ENCODE measurements at regions of chr13 and their contacts with region 1.

Region 1: GRCh38 chr13:77480066-77480465 is 55.4 kb upstream of the SCEL start:
- DNase-seq: no peak
- ATAC-seq: no peak
- H3K4me3 Mint-ChIP-seq: no peak overlapping the region
- H3K27ac Mint-ChIP-seq: no peak overlapping the region
- H3K4me1 Mint-ChIP-seq: peaks cover 14% of the 10 kb centered on the region
- H3K27me3 Mint-ChIP-seq: no peaks in the 10 kb centered on the region

Region 2: GRCh38 chr13:76991796-76992547 is 488.1 kb before region 1 on chr13 and contains the start of gene CLN5:
- CTCF ChIA-PET with region 1: interaction called, 3 read pairs
- POLR2A ChIA-PET with region 1: no interaction called
- intact Hi-C with region 1: loop called in 1 of 2 experiments (anchors 5 kb)
- DNase-seq: peak; percentile 97
- ATAC-seq: peak; percentile 93
- H3K4me3 Mint-ChIP-seq: peak within 1 kb of the TSS; percentile 97
- H3K27ac Mint-ChIP-seq: peak within 1 kb of the TSS; percentile 99
- H3K4me1 Mint-ChIP-seq: peaks cover 36% of the 10 kb centered on the region
- H3K27me3 Mint-ChIP-seq: peaks cover 3% of the 10 kb centered on the region
- total RNA-seq, gene CLN5: 14.5 to 14.9 TPM

Region 3: DNA sequence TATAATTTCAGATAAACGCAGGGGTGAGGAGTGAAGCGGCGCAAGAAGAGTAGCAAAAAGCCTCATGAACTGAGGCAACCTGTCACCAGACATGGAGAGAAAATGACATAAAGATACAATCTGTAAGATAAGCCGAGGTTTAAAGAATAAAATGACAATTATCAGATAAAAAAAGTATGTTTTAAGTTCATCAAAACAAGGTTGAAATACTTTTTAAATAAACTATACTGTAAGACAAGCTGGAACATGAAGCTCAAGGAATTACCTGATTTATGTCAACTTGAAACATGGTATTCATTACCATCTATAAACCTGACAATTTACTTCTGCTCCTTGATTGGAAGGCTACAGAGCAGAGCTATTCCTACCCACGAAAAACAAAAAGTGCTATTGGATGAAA is 214.7 kb before region 1 on chr13:
- CTCF ChIA-PET with region 1: interaction called, 10 read pairs
- POLR2A ChIA-PET with region 1: interaction called, 9 read pairs
- intact Hi-C with region 1: loop called in 1 of 2 experiments (anchors 5 kb)
- DNase-seq: no peak
- ATAC-seq: no peak
- H3K4me3 Mint-ChIP-seq: no peak overlapping the region
- H3K27ac Mint-ChIP-seq: no peak overlapping the region
- H3K4me1 Mint-ChIP-seq: no peaks in the 10 kb centered on the region
- H3K27me3 Mint-ChIP-seq: no peaks in the 10 kb centered on the region

Region 4: GRCh38 chr13:77291774-77292173 is 188.3 kb before region 1 on chr13:
- CTCF ChIA-PET with region 1: interaction called, 4 read pairs
- POLR2A ChIA-PET with region 1: no interaction called
- intact Hi-C with region 1: loop called in 1 of 2 experiments (anchors 1 kb)
- DNase-seq: no peak
- ATAC-seq: peak; percentile 14
- H3K4me3 Mint-ChIP-seq: no peak overlapping the region
- H3K27ac Mint-ChIP-seq: peak overlapping the region; percentile 68
- H3K4me1 Mint-ChIP-seq: peaks cover 35% of the 10 kb centered on the region
- H3K27me3 Mint-ChIP-seq: no peaks in the 10 kb centered on the region

Region 5: DNA sequence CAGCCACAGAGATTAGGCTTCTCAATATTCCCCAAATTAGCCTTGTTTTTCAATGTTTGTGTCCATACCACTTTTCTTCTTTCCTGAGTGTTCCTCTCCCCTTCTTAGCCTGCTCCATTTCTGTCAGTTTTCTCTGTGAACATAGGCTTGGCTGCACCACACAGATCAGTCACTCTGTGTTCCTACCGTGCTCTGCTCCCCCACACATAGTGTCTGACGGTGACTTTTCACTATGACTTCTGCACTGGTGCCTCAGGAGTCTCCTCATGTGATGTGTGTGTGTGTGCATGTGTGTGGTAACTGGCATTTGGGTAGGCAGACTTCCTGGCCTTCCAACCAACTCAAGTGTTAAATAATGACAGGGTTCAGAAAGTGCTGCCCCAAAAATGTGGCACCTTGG is 105.3 kb before region 1 on chr13:
- CTCF ChIA-PET with region 1: no interaction called
- POLR2A ChIA-PET with region 1: no interaction called
- intact Hi-C with region 1: no loop called
- DNase-seq: peak; percentile 37
- ATAC-seq: peak; percentile 69
- H3K4me3 Mint-ChIP-seq: no peak overlapping the region
- H3K27ac Mint-ChIP-seq: peak overlapping the region; percentile 34
- H3K4me1 Mint-ChIP-seq: peaks cover 5% of the 10 kb centered on the region
- H3K27me3 Mint-ChIP-seq: no peaks in the 10 kb centered on the region

Region 6: GRCh38 chr13:77386880-77387606 is 93.0 kb before region 1 on chr13:
- CTCF ChIA-PET with region 1: interaction called, 14 read pairs
- POLR2A ChIA-PET with region 1: no interaction called
- intact Hi-C with region 1: no loop called
- DNase-seq: no peak
- ATAC-seq: peak; percentile 30
- H3K4me3 Mint-ChIP-seq: no peak overlapping the region
- H3K27ac Mint-ChIP-seq: no peak overlapping the region
- H3K4me1 Mint-ChIP-seq: peaks cover 10% of the 10 kb centered on the region
- H3K27me3 Mint-ChIP-seq: no peaks in the 10 kb centered on the region

Region 7: DNA sequence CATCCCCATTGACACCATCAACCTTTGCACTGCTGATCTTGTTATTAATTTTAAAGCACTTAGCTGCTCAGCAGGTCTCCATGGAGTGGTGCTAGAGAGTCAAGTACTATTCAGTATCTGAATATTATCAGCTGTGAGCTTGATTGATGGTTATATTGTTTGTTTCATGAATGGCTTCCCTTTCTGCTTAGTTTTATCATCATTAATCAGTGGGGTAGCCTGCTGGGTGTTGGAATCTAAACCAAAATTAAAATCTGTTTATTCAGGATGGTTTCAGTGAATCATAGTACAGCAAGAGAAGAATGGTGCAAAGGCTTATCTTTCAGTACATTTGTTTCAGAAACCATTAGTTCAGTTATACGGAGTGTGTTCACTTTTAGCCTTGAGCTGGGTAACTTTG is 12.9 kb after region 1 on chr13:
- CTCF ChIA-PET with region 1: interaction called, 15 read pairs
- POLR2A ChIA-PET with region 1: no interaction called
- intact Hi-C with region 1: no loop called
- DNase-seq: peak; percentile 16
- ATAC-seq: no peak
- H3K4me3 Mint-ChIP-seq: no peak overlapping the region
- H3K27ac Mint-ChIP-seq: no peak overlapping the region
- H3K4me1 Mint-ChIP-seq: no peaks in the 10 kb centered on the region
- H3K27me3 Mint-ChIP-seq: no peaks in the 10 kb centered on the region

Region 8: GRCh38 chr13:77653301-77653700 is 173.2 kb after region 1 on chr13:
- CTCF ChIA-PET with region 1: no interaction called
- POLR2A ChIA-PET with region 1: no interaction called
- intact Hi-C with region 1: no loop called
- DNase-seq: no peak
- ATAC-seq: no peak
- H3K4me3 Mint-ChIP-seq: no peak overlapping the region
- H3K27ac Mint-ChIP-seq: no peak overlapping the region
- H3K4me1 Mint-ChIP-seq: no peaks in the 10 kb centered on the region
- H3K27me3 Mint-ChIP-seq: peaks cover 6% of the 10 kb centered on the region

Measured in activated CD4-positive, alpha-beta T cell treated with anti-CD3 and anti-CD28 coated beads for 36 hours (primary cell).